Mucosa of descending colon (tissue), 3 donors: ENCODE measurements at regions of chr2 and their contacts with region 1.

Region 1: DNA sequence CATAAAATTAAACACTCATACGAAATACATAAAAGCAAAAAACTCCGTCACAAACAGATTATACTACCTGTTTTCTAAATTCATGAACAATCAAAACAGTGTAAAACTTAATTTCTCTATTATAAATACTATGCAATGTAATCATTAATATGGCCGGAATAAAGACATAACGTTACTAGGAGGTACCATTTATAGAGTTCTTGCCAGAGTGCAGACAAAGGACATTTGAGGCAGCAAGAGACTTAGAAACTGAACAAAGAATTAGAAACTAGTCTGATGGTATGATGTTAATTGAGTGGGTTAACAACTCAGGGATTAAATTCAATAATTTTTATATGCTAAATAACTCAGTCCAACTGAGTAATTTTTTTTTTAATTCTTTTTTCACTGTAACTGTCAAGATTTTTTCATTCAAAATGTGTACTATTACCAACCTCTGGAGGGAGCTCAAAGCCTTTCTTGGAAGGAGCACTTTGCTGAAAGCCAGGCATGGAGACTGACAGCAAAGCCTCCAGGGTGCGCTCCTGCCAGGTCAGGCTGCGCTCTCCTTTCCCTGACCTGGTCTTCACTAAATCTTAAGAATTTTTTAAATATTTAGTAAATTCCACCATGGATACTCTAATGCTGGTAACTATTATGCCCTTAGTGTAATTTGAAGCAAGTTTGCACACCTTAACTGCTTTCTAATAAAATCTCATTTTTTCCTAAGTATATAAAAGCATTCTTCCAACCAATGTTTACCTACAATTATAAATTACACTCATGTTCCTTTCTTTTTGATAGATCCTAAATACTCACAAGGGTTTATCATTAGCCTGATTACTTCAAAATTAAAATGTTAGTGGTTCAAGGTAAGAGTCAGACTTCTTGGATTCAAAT is 34.1 kb downstream of the WDR35 start:
- DNase-seq: peak in 2 of 3 donors; percentile 49 to 59
- ATAC-seq: peak; percentile 94
- H3K4me3 ChIP-seq: no peak overlapping the region
- H3K4me1 ChIP-seq: no peaks in the 10 kb centered on the region
- CTCF ChIP-seq: peak; percentile 40

Region 2: GRCh38 chr2:19819097-19820065 is 136.4 kb before region 1 on chr2:
- intact Hi-C with region 1: no loop called
- DNase-seq: no peak
- ATAC-seq: no peak
- H3K4me3 ChIP-seq: no peak overlapping the region
- H3K4me1 ChIP-seq: no peaks in the 10 kb centered on the region
- CTCF ChIP-seq: no peak

Region 3: DNA sequence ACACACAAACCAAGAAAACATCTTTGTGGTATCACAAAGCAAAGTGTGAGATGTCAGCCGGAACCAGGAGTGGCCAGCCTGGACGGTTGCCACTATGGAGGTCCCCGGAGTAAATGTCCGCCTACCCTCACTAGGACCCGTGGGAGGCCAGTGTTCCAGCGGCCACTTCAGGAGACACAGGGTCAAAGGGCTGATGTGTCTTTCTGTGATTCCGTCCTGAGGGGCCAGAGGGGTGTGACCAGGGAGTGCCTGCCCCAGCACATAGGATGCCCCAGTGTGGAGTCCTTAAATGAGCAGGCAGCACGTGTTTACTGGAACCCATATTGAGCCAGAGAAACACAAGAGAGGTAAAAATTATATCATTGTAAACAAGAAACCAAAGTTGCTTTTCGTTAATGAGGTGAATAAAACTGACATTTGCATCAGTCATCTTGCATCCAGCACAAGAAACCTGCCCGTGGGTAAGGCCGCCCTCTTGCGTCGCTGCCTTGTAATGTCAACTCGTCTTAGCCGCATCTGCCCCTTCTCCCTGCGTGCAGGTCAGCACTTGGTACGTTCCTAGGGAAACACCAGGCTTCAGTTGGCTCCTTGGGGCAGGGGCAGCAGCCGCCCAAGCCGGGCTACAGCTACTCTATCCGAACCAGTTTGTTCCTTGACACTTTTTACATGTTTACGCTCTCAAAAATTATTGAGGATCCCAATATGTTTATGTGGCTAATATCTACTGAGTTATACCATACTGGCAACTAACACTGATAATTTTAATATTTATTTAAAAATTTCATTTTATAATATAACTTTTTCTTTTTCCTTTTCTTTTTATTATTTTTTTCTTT is 142.3 kb after region 1 on chr2:
- intact Hi-C with region 1: loop called in 1 of 2 experiments (anchors 5 kb)
- DNase-seq: peak; percentile 84 to 92 (median 85)
- ATAC-seq: peak; percentile 96
- H3K4me3 ChIP-seq: no peak overlapping the region
- H3K4me1 ChIP-seq: peaks cover 2% of the 10 kb centered on the region
- CTCF ChIP-seq: peak; percentile 79